ENCODE measurements at regions of chr10 and their contacts with region 1.

Region 1: GRCh38 chr10:49518982-49519578 is 19.8 kb downstream of the ERCC6 start:
- DNase-seq: no peak
- H3K4me3 ChIP-seq: no peak overlapping the region
- H3K27ac ChIP-seq: no peak overlapping the region
- H3K4me1 ChIP-seq: peaks cover 0 to 4% (median 0%) of the 10 kb centered on the region in 4 donors
- H3K27me3 ChIP-seq: no peaks in the 10 kb centered on the region
- CTCF ChIP-seq: peak; percentile 50 to 63 (median 51)
- EP300 ChIP-seq: no peak
- POLR2A ChIP-seq: no peak

Region 2: GRCh38 chr10:48656241-48656913 is 862.7 kb before region 1 on chr10:
- intact Hi-C with region 1: loop called (anchors 10 kb)
- DNase-seq: peak; percentile 97
- H3K4me3 ChIP-seq: peak overlapping the region; percentile 60 to 70 (median 62)
- H3K27ac ChIP-seq: peak overlapping the region; percentile 68 to 78 (median 70)
- H3K4me1 ChIP-seq: peaks cover 15 to 21% (median 19%) of the 10 kb centered on the region in 4 donors
- H3K27me3 ChIP-seq: peaks cover 0 to 7% (median 0%) of the 10 kb centered on the region in 4 donors
- CTCF ChIP-seq: peak; percentile 97 to 99 (median 98)
- EP300 ChIP-seq: no peak
- POLR2A ChIP-seq: no peak

Region 3: DNA sequence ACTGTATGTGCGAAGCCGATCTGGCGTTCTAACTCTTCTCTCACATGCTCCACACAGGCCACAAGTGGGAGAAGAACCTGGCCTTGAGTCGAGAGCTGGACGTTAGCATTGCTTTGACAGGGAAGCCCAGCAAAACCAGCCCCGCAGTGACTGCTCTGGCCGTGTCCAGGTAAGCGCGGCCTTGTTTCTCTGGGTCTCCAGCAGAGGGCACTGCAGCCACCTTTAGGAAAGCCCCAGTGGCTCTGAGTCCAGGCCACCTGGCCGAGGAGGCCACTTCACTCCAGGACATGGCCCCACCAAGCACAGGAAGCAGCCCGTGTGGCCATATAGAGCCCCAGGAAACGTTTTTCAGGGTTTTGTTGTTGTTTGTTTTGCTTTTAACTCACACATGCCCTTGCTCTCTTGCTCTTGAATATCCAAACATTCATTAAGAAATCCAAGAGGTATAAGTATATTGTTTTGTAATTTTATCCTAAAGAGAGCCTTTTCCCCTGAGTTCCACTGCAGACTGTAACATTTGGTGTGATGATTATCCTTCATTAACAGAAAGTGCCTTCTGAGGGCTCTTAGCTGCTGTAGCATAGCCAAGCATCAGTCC is 537.7 kb before region 1 on chr10:
- intact Hi-C with region 1: loop called (anchors 10 kb)
- DNase-seq: no peak
- H3K4me3 ChIP-seq: no peak overlapping the region
- H3K27ac ChIP-seq: no peak overlapping the region
- H3K4me1 ChIP-seq: peaks cover 0 to 5% (median 2%) of the 10 kb centered on the region in 4 donors
- H3K27me3 ChIP-seq: no peaks in the 10 kb centered on the region
- CTCF ChIP-seq: peak; percentile 56 to 85 (median 59)
- EP300 ChIP-seq: no peak
- POLR2A ChIP-seq: no peak

Region 4: GRCh38 chr10:49407552-49408137 is 111.4 kb before region 1 on chr10:
- intact Hi-C with region 1: loop called (anchors 5 kb)
- DNase-seq: no peak
- H3K4me3 ChIP-seq: no peak overlapping the region
- H3K27ac ChIP-seq: no peak overlapping the region
- H3K4me1 ChIP-seq: no peaks in the 10 kb centered on the region
- H3K27me3 ChIP-seq: peaks cover 0 to 86% (median 2%) of the 10 kb centered on the region in 4 donors
- CTCF ChIP-seq: peak; percentile 60 to 85 (median 65)
- EP300 ChIP-seq: no peak
- POLR2A ChIP-seq: no peak